ENCODE measurements at regions of chr12 and their contacts with region 1.

Region 1: DNA sequence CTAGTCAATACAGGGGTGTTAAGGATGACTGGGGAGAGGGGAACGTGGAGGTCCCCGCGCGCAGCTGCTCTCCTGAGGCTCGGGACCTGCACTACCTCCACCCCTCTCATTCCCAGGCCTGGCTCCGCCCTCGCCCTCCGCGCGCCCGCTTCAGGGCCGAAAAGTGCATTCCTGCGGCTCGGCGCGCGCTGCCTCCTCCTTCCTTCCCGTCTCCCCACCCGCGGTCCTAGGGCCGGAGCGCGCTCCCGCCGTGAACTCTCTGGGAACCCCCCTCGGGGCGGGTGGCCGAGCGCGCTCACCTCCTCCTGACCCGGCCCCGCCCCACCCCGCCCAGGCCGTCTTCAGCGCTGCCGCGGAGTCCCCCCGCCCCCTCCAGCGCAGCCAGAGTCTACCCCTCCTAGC is 11.2 kb downstream of the RARG start:
- DNase-seq: peak; percentile 88
- H3K4me3 Mint-ChIP-seq: peak overlapping the region; percentile 99
- H3K27ac Mint-ChIP-seq: peak overlapping the region; percentile 95
- H3K4me1 Mint-ChIP-seq: peaks cover 82% of the 10 kb centered on the region
- H3K27me3 Mint-ChIP-seq: peaks cover 8% of the 10 kb centered on the region

Region 2: DNA sequence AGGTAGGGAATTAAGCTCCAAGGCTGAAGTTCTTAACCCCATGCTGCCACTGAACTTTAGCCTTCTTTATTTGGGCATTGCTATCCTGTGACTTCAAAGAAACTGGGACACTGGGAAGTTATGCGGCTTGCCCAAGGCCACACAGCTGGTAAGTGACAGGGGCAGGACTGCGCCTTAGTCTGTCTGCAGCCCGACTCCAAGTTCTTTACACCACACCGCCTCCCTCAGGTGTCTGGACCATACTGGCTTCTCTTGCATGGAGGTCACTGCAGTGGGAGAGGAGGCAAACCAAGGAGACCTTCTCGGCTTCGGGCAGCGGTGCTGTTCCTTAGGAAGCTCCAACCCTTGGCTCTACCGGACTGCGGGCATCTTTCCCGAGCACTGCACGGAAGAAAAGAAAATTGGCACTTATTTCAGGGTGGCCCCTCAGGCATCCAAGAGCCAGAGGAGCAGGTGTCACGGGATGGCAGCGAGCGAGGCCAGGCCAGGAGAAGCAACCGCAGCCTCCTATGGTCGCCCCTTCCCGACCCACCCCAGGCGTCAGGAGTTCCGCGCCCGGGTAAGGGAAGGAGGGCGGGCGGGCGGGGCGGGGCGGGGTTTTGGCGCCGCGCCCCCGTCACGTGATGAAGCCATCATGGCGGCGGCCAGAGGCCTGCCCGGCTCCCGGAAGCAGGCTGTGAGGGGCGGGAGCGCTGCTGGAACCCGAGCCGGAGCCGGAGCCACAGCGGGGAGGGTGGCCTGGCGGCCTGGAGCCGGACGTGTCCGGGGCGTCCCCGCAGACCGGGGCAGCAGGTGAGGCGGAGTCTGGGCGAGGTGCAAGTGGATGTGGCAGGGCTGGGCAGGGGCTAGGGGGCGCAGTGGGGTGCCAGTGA is 30.9 kb after region 1 on chr12:
- CTCF ChIA-PET with region 1: interaction called, 250 read pairs
- DNase-seq: peak; percentile 85
- H3K4me3 Mint-ChIP-seq: peak overlapping the region; percentile 96
- H3K27ac Mint-ChIP-seq: peak overlapping the region; percentile 89
- H3K4me1 Mint-ChIP-seq: peaks cover 48% of the 10 kb centered on the region
- H3K27me3 Mint-ChIP-seq: peaks cover 6% of the 10 kb centered on the region